Prostate gland (tissue), 2 donors: ENCODE measurements at regions of chr10 and their contacts with region 1.

Region 1: GRCh38 chr10:13299437-13300287 is at the start of gene PHYH:
- DNase-seq: peak; percentile 89
- H3K4me3 ChIP-seq: peak within 1 kb of the TSS; percentile 67 to 97
- H3K27ac ChIP-seq: peak within 1 kb of the TSS; percentile 95 to 98
- H3K4me1 ChIP-seq: no peaks in the 10 kb centered on the region
- H3K27me3 ChIP-seq: no peaks in the 10 kb centered on the region
- CTCF ChIP-seq: peak in 1 of 4 experiments; percentile 16
- POLR2A ChIP-seq: peak; percentile 88
- total RNA-seq, gene PHYH: 18.2 to 27.4 TPM

Region 2: GRCh38 chr10:13115832-13116803 is 183.5 kb before region 1 on chr10:
- intact Hi-C with region 1: no loop called
- DNase-seq: no peak
- H3K4me3 ChIP-seq: no peak overlapping the region
- H3K27ac ChIP-seq: peak overlapping the region in 1 of 2 donors; percentile 1
- H3K4me1 ChIP-seq: no peaks in the 10 kb centered on the region
- H3K27me3 ChIP-seq: no peaks in the 10 kb centered on the region
- CTCF ChIP-seq: no peak
- POLR2A ChIP-seq: no peak

Region 3: DNA sequence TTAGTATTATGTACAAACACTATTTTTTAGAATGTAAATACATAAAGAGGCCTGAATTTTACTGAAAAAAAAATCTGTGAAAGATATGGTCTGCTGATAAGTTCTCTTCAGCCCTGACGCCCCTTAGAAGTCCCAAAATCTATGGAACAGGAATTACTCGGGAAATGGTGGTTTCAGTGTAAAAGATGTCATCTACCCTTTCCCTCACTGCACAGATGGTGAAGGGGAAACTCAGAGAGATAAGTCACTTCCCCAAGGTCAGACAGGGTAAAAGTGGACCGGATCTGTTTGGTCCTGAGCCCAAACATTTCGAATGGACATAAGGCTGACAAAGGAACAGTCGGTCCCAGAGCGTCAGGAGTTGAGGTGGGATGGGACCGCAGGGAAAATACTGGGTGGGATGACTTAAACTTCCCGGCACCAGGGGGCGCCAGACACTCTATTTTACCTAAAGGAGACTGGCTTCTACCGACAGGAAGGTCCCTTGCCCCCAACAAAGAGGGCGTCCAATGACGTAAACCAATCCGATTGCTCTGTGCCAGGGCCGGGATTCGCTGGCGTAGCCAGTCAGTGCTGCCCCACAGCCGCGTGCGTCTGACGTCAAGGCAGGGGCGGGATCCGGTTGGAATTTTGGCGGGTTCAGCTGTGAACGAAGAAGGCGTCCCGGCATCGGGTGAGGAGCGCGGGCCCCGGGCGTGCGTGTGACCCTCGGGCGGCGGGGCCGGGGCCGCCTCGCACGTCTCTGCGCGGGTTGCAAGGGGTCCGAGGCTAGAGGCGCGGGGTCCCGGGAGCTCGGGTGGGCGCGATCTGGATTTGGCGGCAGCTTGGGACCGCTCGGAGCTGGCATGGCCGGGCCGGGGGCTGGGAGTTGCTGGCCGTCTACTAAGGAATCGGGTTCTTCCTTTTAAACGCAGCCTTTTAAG is 138.5 kb before region 1 on chr10 and contains the start of gene MCM10:
- intact Hi-C with region 1: loop called (anchors 2 kb)
- DNase-seq: peak; percentile 98
- H3K4me3 ChIP-seq: peak within 1 kb of the TSS; percentile 25 to 36
- H3K27ac ChIP-seq: no peak within 1 kb of the TSS
- H3K4me1 ChIP-seq: no peaks in the 10 kb centered on the region
- H3K27me3 ChIP-seq: no peaks in the 10 kb centered on the region
- CTCF ChIP-seq: peak; percentile 66 to 96 (median 96)
- POLR2A ChIP-seq: no peak
- total RNA-seq, gene MCM10: 0.55 to 1.6 TPM

Region 4: DNA sequence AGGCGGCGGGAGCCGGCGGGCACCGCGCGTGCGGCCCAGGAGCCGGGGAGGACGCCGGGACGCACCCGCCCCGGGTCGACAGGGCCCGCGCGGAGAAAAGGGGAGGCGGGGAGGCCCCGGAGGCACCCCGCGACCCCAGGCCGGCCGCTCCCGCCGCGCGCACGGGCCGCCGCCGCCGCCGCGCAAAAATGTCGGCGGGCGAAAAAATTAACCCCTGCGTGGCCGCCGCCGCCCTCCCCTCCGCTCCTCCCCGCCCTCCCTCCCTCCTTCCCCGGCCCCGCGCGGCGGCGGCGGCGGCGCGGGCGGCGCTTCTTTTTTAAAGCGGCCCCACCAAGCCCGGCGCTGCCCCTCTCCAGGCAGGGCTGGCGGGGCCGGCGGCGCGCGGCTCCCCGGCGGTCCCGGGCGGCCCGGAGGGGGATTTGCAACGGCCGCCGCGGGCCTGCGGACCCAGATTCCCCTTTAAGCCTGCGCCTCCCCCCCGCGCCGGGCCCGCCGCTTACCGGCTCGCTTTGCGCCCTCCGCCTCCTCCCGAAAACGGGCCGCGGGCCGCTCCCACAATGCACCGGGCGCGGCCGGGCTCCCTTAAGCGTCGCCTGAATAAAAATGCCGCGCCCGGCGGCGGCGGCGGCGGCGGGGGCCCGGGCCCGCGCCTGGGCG is 48.0 kb after region 1 on chr10:
- intact Hi-C with region 1: loop called (anchors 2 kb)
- DNase-seq: peak; percentile 76
- H3K4me3 ChIP-seq: peak overlapping the region; percentile 80 to 83
- H3K27ac ChIP-seq: peak overlapping the region; percentile 92 to 96
- H3K4me1 ChIP-seq: no peaks in the 10 kb centered on the region
- H3K27me3 ChIP-seq: no peaks in the 10 kb centered on the region
- CTCF ChIP-seq: no peak
- POLR2A ChIP-seq: no peak